ENCODE measurements at regions of chr5 and their contacts with region 1.

Region 1: GRCh38 chr5:51573835-51574234 is 190.6 kb downstream of the ISL1 start:
- DNase-seq: no peak
- ATAC-seq: no peak
- H3K4me3 ChIP-seq: no peak overlapping the region
- H3K27ac ChIP-seq: no peak overlapping the region
- H3K4me1 ChIP-seq: no peaks in the 10 kb centered on the region
- H3K27me3 ChIP-seq: no peaks in the 10 kb centered on the region
- CTCF ChIP-seq: no peak
- POLR2A ChIP-seq: no peak

Region 2: DNA sequence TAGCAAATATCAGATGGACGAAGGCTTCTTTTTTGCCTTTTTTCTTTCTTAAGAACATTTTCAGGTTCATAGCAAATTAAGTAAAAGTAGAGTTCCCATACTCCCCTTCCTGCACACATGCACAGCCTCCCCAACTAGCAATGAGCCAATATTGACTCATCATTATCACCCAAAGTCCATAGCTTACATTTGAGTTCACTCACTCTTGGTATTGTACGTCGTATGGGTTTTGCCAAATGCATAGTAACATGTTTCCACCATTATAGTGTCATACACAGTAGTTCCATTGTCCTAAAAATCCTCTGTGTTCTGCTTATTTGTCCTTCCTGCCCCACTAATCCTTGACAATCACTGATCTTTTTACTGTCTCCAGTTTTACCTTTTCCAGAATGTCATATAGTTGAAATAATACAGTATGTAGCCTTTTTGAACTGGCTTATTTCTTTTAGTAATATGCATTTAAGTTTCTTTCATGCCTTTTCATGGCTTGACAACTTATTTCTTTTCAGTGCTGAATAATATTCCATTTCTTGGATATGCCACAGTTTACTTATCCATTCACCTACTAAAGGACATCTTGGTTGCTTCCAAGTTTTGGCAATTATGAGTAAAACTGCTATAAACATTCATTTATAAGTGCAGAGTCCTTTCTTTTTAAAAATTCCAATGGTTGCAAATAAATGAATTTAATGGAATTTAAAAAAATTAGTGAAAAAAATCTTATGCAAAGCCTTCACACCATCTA is 51.6 kb after region 1 on chr5:
- intact Hi-C with region 1: loop called in 1 of 10 experiments (anchors 5 kb)
- DNase-seq: no peak
- ATAC-seq: no peak
- H3K4me3 ChIP-seq: no peak overlapping the region
- H3K27ac ChIP-seq: no peak overlapping the region
- H3K4me1 ChIP-seq: no peaks in the 10 kb centered on the region
- H3K27me3 ChIP-seq: no peaks in the 10 kb centered on the region
- CTCF ChIP-seq: no peak
- POLR2A ChIP-seq: no peak

Measured in heart left ventricle (tissue), 16 donors.